AG04450 (cell line): ENCODE measurements at regions of chr2 and their contacts with region 1.

Region 1: DNA sequence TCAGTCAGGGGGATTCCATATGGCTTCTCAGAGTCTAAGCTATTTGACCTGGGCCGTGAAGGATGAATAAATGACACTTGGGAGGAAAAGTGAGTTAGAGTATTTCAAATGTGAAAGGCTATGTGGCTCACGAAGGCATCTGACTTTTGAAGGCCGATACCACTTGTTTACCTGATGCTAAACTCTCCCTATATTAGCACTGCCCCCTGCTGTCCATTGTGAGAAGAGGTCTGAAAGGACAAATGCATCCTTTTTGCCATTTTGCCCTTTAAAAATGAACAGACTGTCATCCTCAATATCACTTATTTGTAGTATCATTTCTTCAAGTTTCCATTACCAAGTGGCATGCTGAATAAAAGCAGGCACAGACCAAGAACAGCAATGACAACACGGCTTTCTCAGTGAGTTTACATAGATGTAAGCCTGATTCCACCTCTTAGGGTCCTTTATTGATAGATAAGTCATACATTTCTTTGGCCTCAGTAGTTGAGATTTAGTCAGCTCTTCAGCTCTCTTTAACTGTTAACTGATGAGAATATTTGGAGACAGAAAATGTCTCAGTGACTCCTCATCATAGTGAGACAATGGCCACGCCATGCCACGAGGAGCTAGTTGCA is 40.1 kb downstream of the DOCK10 start:
- DNase-seq: no peak
- H3K4me3 ChIP-seq: no peak overlapping the region
- H3K27ac ChIP-seq: peak overlapping the region; percentile 22
- H3K27me3 ChIP-seq: no peaks in the 10 kb centered on the region
- CTCF ChIP-seq: peak; percentile 81

Region 2: DNA sequence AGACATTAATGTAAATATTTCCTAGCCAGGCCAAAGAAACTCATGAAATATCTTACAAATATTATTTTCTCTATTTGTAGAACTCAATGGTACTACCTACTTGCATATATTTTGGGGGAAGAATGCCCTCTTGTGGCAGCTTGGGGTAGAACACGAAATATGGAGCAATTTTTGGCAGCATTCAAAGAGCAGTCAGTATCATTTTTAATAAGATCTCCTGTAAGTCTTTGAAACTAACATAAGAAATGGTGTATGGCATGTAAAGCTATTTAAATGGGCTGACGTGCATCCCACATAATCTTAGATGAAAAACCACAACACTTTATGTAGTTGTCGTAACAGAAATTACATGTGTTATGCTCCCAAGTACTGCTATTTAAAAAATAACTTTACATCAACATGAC is 223.7 kb before region 1 on chr2:
- CTCF ChIA-PET with region 1: interaction called, 28 read pairs
- POLR2A ChIA-PET with region 1: no interaction called
- DNase-seq: peak; percentile 39
- H3K4me3 ChIP-seq: no peak overlapping the region
- H3K27ac ChIP-seq: no peak overlapping the region
- H3K27me3 ChIP-seq: no peaks in the 10 kb centered on the region
- CTCF ChIP-seq: peak; percentile 78

Region 3: DNA sequence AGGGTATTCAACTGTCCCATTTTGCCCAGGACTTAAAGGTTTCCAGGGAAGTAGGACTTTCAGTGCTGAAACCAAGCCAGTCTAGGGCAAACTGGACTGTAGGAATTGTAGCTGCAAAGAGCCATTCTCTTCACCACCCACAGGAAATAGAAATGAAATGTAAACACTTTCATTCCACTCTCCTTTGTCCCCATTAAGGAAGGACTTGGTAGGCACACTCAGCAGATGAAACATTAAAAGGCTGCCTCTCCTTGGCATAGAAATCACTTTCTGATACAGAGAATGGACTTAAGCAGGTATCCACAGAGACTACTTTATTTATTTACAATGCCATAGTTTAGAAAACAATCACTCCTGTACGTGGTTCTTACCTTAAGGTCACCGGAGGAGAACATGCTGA is 183.1 kb before region 1 on chr2:
- CTCF ChIA-PET with region 1: interaction called, 11 read pairs
- POLR2A ChIA-PET with region 1: no interaction called
- DNase-seq: no peak
- H3K4me3 ChIP-seq: no peak overlapping the region
- H3K27ac ChIP-seq: no peak overlapping the region
- H3K27me3 ChIP-seq: no peaks in the 10 kb centered on the region
- CTCF ChIP-seq: no peak

Region 4: GRCh38 chr2:224837558-224837957 is 164.6 kb before region 1 on chr2:
- CTCF ChIA-PET with region 1: interaction called, 11 read pairs
- POLR2A ChIA-PET with region 1: no interaction called
- DNase-seq: peak; percentile 69
- H3K4me3 ChIP-seq: no peak overlapping the region
- H3K27ac ChIP-seq: no peak overlapping the region
- H3K27me3 ChIP-seq: no peaks in the 10 kb centered on the region
- CTCF ChIP-seq: no peak

Region 5: GRCh38 chr2:224927646-224928173 is 74.4 kb before region 1 on chr2:
- CTCF ChIA-PET with region 1: interaction called, 11 read pairs
- POLR2A ChIA-PET with region 1: no interaction called
- DNase-seq: peak; percentile 60
- H3K4me3 ChIP-seq: no peak overlapping the region
- H3K27ac ChIP-seq: peak overlapping the region; percentile 86
- H3K27me3 ChIP-seq: no peaks in the 10 kb centered on the region
- CTCF ChIP-seq: no peak

Region 6: GRCh38 chr2:224982910-224983711 is 19.0 kb before region 1 on chr2:
- CTCF ChIA-PET with region 1: interaction called, 84 read pairs
- POLR2A ChIA-PET with region 1: no interaction called
- DNase-seq: peak; percentile 61
- H3K4me3 ChIP-seq: peak overlapping the region; percentile 50
- H3K27ac ChIP-seq: peak overlapping the region; percentile 88
- H3K27me3 ChIP-seq: no peaks in the 10 kb centered on the region
- CTCF ChIP-seq: no peak

Region 7: GRCh38 chr2:225020168-225020849 is 18.2 kb after region 1 on chr2:
- CTCF ChIA-PET with region 1: interaction called, 10 read pairs
- POLR2A ChIA-PET with region 1: no interaction called
- DNase-seq: no peak
- H3K4me3 ChIP-seq: no peak overlapping the region
- H3K27ac ChIP-seq: no peak overlapping the region
- H3K27me3 ChIP-seq: no peaks in the 10 kb centered on the region
- CTCF ChIP-seq: no peak